WTC11 (cell line): ENCODE measurements at regions of chr22 and their contacts with region 1.

Region 1: DNA sequence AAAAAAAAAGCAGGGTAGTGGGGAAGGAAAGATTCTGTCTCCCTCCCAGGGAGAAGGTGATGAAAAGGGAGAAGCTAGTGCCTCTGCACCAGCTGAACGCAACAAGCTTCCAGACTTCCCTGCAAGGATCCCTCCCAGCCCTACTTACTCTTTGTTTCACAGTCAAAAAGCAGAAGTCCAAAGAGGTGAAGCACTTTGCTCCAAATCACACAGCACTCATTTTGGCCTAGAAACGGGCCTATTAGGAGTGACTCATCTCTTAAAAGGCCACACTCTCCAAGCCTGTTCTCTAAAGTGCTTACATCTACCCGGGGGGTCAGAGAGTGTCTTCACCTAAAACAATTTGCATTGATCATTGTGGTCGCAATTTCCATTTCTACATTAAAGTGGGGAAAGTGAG is 17.7 kb upstream of the GRK3 start:
- DNase-seq: no peak
- ATAC-seq: no peak
- H3K4me3 Mint-ChIP-seq: no peak overlapping the region
- H3K27ac Mint-ChIP-seq: no peak overlapping the region
- H3K4me1 Mint-ChIP-seq: peaks cover 5% of the 10 kb centered on the region
- H3K27me3 Mint-ChIP-seq: no peaks in the 10 kb centered on the region; the same call in none of the 2 replicates
- CTCF ChIP-seq: no peak

Region 2: GRCh38 chr22:25518000-25518663 is 28.6 kb before region 1 on chr22:
- CTCF ChIA-PET with region 1: no interaction called
- POLR2A ChIA-PET with region 1: no interaction called
- DNase-seq: no peak
- ATAC-seq: no peak
- H3K4me3 Mint-ChIP-seq: no peak overlapping the region
- H3K27ac Mint-ChIP-seq: no peak overlapping the region
- H3K4me1 Mint-ChIP-seq: peaks cover 9% of the 10 kb centered on the region
- H3K27me3 Mint-ChIP-seq: no peaks in the 10 kb centered on the region
- CTCF ChIP-seq: no peak

Region 3: DNA sequence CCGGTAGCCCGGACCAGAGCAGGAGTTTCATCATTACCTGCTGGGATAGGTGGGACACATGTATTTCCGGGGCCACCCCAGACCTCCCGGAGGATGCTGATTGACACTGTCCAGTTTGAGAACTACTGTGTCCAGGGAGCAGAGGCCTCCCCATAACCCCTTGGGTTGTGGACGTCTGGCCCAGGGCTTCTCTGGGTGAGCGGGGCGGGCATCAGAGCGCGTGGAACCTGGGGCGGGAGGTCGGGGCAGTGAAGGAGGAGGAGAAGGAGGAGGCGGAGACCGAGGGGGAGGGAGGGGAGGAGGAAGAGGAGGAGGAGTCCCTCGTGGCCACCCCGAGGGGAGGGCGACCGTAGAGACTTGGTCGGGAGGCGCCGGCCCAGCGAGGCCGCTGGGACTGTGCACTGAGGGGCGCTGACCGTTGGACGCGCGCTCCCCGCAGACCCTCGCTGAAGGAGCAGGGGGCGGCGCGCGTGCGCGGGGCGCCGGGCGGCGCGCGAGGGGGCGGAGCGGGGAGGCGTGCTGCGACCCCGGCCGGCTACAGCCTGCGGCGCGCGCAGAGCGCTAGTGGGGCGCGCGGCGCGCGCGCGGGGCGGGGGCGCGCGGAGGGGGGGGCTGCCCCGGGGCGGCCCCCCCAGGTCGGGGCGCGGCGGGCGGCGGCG is 17.7 kb after region 1 on chr22 and contains the start of gene GRK3:
- CTCF ChIA-PET with region 1: interaction called, 16 read pairs
- POLR2A ChIA-PET with region 1: no interaction called
- DNase-seq: peak; percentile 70
- ATAC-seq: peak; percentile 69
- H3K4me3 Mint-ChIP-seq: peak within 1 kb of the TSS; percentile 95
- H3K27ac Mint-ChIP-seq: peak within 1 kb of the TSS; percentile 71; the same call in 1 of the 2 replicates
- H3K4me1 Mint-ChIP-seq: peaks cover 43% of the 10 kb centered on the region
- H3K27me3 Mint-ChIP-seq: peaks cover 30% of the 10 kb centered on the region
- CTCF ChIP-seq: no peak
- total RNA-seq, gene GRK3: 25.7 to 27.1 TPM (median 25.8 TPM) in 3 replicates

Region 4: GRCh38 chr22:25702040-25702439 is 155.3 kb after region 1 on chr22:
- CTCF ChIA-PET with region 1: interaction called, 12 read pairs
- POLR2A ChIA-PET with region 1: no interaction called
- DNase-seq: no peak
- ATAC-seq: no peak
- H3K4me3 Mint-ChIP-seq: no peak overlapping the region
- H3K27ac Mint-ChIP-seq: no peak overlapping the region
- H3K4me1 Mint-ChIP-seq: no peaks in the 10 kb centered on the region
- H3K27me3 Mint-ChIP-seq: no peaks in the 10 kb centered on the region
- CTCF ChIP-seq: no peak

Region 5: DNA sequence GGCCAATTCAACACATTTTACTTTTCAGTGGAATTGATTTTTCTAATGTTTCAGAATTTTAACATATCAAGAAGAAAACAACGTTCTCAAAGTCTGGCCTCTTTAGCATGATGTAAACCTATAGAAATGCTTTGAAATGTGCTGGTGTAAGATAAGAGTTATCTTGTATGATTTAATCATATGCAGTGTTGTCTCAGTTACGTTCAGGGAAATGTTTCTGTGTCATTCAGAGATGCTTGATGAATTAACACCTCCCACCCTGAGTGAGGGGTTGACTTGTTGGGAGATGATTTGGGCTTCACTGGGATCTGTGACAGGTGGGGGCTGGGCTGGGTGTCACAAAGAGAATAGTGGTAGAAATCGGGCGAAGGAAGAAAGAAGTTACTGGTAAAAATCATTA is 179.5 kb after region 1 on chr22:
- CTCF ChIA-PET with region 1: interaction called, 12 read pairs
- POLR2A ChIA-PET with region 1: no interaction called
- DNase-seq: no peak
- ATAC-seq: no peak
- H3K4me3 Mint-ChIP-seq: no peak overlapping the region
- H3K27ac Mint-ChIP-seq: no peak overlapping the region; the same call in 1 of the 2 replicates
- H3K4me1 Mint-ChIP-seq: peaks cover 12% of the 10 kb centered on the region
- H3K27me3 Mint-ChIP-seq: no peaks in the 10 kb centered on the region
- CTCF ChIP-seq: no peak